GM10248 (cell line): ENCODE measurements at regions of chr12 and their contacts with region 1.

Region 1: DNA sequence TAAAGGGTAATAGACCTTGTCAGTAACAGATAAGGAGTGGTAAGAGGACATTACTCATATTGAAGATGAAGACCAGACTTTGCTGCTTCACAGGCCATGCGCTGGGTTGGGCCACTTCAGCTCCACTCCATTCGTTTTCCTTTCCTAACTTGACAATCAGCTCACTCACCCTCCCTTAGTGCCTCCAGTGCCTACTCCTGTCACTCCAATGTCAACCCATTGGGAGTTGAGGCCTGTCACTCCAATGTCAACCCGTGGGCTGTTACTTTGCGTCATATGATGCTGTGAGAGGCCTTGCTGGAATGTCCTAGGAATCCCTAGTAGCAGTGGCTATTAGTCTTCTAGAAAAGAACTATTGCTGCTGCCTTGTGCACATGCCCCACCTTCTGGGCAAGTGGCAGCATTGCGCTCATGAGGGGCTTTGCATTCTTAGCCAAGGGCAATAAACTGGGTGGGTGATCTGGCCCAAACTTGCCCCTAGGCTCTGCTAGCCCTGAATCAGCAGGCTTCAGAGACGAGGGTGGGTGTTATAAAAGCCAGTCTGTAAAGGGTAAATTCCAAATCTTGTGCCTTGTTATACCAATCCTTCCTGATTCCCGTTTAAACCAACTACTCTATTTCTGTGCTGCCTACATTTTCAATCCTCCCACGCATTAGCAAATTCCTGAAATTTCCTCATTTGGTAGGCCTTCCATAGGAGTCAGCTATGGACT is 36.1 kb downstream of the BAZ2A start:
- DNase-seq: peak; percentile 71
- CTCF ChIP-seq: peak; percentile 90

Region 2: GRCh38 chr12:56521590-56522371 is 72.3 kb before region 1 on chr12 and contains the start of gene RBMS2:
- CTCF ChIA-PET with region 1: interaction called, 12 read pairs
- POLR2A ChIA-PET with region 1: no interaction called
- DNase-seq: peak; percentile 46
- CTCF ChIP-seq: no peak

Region 3: DNA sequence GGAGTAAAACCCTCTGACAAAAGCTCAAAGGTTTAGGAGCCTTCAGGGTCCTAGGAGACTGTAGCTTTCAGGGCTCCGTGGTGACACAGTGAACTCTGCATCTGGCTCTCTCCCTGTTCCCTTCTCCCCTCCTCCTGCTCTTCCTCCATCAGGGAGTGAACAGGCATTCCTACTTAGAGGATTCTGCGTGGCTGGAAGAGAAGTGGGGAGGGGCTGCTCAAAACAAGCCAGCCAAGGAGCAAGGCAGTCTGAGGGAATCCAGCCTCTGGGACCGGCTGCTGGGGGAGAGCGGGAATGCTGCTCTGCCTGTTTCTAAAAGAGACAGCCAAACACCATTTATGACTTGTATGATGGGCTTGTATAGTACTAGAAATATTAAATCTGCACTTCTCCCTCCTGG is 22.9 kb before region 1 on chr12:
- CTCF ChIA-PET with region 1: interaction called, 16 read pairs
- POLR2A ChIA-PET with region 1: no interaction called
- DNase-seq: no peak
- CTCF ChIP-seq: no peak

Region 4: DNA sequence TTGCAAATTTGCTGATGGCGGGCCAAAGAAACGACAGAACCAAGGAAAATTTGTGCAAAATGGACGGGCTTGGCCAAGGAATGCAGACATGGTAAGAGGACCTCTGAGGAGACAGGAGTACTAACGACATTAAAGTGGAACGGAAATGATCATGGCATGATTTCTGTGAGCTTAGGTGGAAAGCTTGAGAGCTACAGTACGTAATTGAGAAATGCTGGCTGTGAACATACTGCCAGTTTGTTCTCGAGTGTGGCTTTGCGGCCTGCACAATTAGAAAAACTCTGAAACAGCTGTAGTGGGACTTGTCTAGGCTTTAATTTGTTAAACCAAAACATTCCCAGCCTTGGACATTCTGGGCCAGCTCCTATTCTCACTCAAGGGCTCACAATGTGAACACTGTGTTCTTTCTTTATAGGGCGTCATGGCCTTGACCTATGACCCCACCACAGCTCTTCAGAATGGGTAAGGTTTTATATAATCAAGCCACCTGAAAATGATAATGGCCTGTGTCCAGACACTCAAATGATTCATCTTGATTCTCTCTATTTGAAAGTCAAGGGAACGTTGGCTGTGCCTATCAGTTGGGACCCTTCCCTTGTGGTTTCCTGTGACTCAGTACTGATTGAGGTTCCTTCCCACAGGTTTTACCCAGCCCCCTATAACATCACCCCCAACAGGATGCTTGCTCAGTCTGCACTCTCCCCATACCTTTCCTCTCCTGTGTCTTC is 12.5 kb before region 1 on chr12:
- CTCF ChIA-PET with region 1: interaction called, 13 read pairs
- POLR2A ChIA-PET with region 1: no interaction called
- DNase-seq: no peak
- CTCF ChIP-seq: no peak

Region 5: GRCh38 chr12:56616925-56617324 is 22.9 kb after region 1 on chr12:
- CTCF ChIA-PET with region 1: interaction called, 17 read pairs
- POLR2A ChIA-PET with region 1: no interaction called
- DNase-seq: no peak
- CTCF ChIP-seq: no peak

Region 6: DNA sequence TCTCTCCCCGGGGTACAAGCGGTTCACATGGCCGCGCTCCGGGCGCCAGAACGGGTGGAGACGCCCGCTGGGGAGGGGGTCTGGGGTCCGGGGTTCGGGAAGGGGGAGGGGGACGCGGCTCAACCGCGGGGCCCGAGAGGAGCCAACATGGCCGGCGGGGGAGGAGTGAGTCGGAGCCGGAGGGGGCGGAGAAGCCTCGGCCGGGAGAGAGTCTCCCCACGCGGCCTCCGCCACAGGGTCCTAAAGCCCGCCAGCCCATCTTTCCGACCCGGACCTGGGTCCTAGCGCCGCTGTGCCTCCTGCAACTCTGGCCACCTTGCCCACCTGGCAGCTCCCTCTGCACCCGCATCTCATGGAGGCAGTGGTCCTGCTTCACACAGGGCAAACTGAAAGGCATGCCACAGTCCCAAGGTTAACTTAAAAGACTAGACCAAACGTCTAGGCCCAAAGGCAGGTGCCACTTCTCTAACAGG is 36.1 kb after region 1 on chr12 and contains the start of gene BAZ2A:
- CTCF ChIA-PET with region 1: interaction called, 13 read pairs
- POLR2A ChIA-PET with region 1: no interaction called
- DNase-seq: peak; percentile 90
- CTCF ChIP-seq: no peak

Region 7: GRCh38 chr12:57046947-57047890 is 453.2 kb after region 1 on chr12:
- CTCF ChIA-PET with region 1: no interaction called
- POLR2A ChIA-PET with region 1: no interaction called
- DNase-seq: no peak
- CTCF ChIP-seq: no peak